GM12878 (cell line): ENCODE measurements at regions of chr3 and their contacts with region 1.

Region 1: DNA sequence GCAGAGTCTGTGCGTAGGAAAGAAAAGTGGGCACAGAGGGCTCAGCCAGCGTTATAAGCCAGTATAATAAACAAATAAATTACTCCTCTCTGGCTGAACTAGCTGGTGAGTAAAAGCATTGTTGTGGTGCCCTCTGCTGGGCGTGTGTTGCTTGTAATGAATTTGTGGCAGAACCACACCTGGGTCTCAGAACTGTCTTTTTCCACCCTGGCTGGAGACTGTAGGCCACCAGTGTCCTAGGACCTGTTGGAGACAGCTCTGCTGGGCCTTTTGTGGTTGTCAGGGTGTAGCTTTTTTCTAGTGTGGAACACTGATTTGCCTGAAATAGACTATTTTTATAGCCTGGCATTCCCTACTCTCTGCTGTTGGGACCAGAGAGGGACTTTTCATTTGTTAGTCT is 130.5 kb upstream of the EIF1B start:
- DNase-seq: no peak
- ATAC-seq: peak; percentile 92
- H3K4me3 ChIP-seq: no peak overlapping the region
- H3K27ac ChIP-seq: no peak overlapping the region
- H3K4me1 ChIP-seq: no peaks in the 10 kb centered on the region
- H3K27me3 ChIP-seq: no peaks in the 10 kb centered on the region; a peak in 1 of 4 replicates
- CTCF ChIP-seq: peak; percentile 68 to 73 (median 71)
- EP300 ChIP-seq: no peak
- POLR2A ChIP-seq: no peak
- RAD21 ChIP-seq: peak; percentile 79

Region 2: GRCh38 chr3:39668420-39668819 is 510.6 kb before region 1 on chr3:
- CTCF ChIA-PET with region 1: interaction called, 3 read pairs
- POLR2A ChIA-PET with region 1: no interaction called
- RAD21 ChIA-PET with region 1: no interaction called
- SMC1A ChIA-PET with region 1: no interaction called
- in situ Hi-C with region 1: no loop called
- intact Hi-C with region 1: loop called (anchors 1 kb)
- DNase-seq: no peak
- ATAC-seq: peak; percentile 85
- H3K4me3 ChIP-seq: no peak overlapping the region
- H3K27ac ChIP-seq: no peak overlapping the region
- H3K4me1 ChIP-seq: no peaks in the 10 kb centered on the region
- H3K27me3 ChIP-seq: no peaks in the 10 kb centered on the region; a peak in 2 of 4 replicates
- CTCF ChIP-seq: peak; percentile 53 to 60 (median 58)
- EP300 ChIP-seq: no peak
- POLR2A ChIP-seq: no peak
- RAD21 ChIP-seq: peak; percentile 48

Region 3: GRCh38 chr3:39724233-39724846 is 454.7 kb before region 1 on chr3:
- CTCF ChIA-PET with region 1: interaction called, 5 read pairs
- POLR2A ChIA-PET with region 1: no interaction called
- RAD21 ChIA-PET with region 1: no interaction called
- SMC1A ChIA-PET with region 1: interaction called, 7 read pairs
- in situ Hi-C with region 1: no loop called
- intact Hi-C with region 1: loop called (anchors 2 kb)
- DNase-seq: no peak
- ATAC-seq: no peak
- H3K4me3 ChIP-seq: no peak overlapping the region
- H3K27ac ChIP-seq: no peak overlapping the region
- H3K4me1 ChIP-seq: no peaks in the 10 kb centered on the region
- H3K27me3 ChIP-seq: no peaks in the 10 kb centered on the region
- CTCF ChIP-seq: peak; percentile 8 to 25 (median 23); a peak in 2 of 6 replicates
- EP300 ChIP-seq: no peak
- POLR2A ChIP-seq: no peak
- RAD21 ChIP-seq: no peak

Region 4: GRCh38 chr3:40191850-40192448 is 12.9 kb after region 1 on chr3:
- CTCF ChIA-PET with region 1: interaction called, 77 read pairs
- POLR2A ChIA-PET with region 1: no interaction called
- RAD21 ChIA-PET with region 1: interaction called, 10 read pairs
- SMC1A ChIA-PET with region 1: interaction called, 25 read pairs
- in situ Hi-C with region 1: no loop called
- intact Hi-C with region 1: no loop called
- DNase-seq: no peak
- ATAC-seq: peak; percentile 75
- H3K4me3 ChIP-seq: no peak overlapping the region
- H3K27ac ChIP-seq: no peak overlapping the region
- H3K4me1 ChIP-seq: peaks cover 18% of the 10 kb centered on the region
- H3K27me3 ChIP-seq: no peaks in the 10 kb centered on the region
- CTCF ChIP-seq: peak; percentile 86 to 95 (median 89)
- EP300 ChIP-seq: no peak
- POLR2A ChIP-seq: no peak
- RAD21 ChIP-seq: peak; percentile 89

Region 5: GRCh38 chr3:40642812-40643211 is 463.8 kb after region 1 on chr3:
- CTCF ChIA-PET with region 1: no interaction called
- POLR2A ChIA-PET with region 1: no interaction called
- RAD21 ChIA-PET with region 1: no interaction called
- SMC1A ChIA-PET with region 1: no interaction called
- in situ Hi-C with region 1: no loop called
- intact Hi-C with region 1: no loop called
- DNase-seq: no peak
- ATAC-seq: no peak
- H3K4me3 ChIP-seq: no peak overlapping the region
- H3K27ac ChIP-seq: no peak overlapping the region
- H3K4me1 ChIP-seq: no peaks in the 10 kb centered on the region
- H3K27me3 ChIP-seq: no peaks in the 10 kb centered on the region
- CTCF ChIP-seq: no peak
- EP300 ChIP-seq: no peak
- POLR2A ChIP-seq: no peak
- RAD21 ChIP-seq: no peak